Naive thymus-derived CD8-positive, alpha-beta T cell (primary cell): ENCODE measurements at regions of chr10 and their contacts with region 1.

Region 1: DNA sequence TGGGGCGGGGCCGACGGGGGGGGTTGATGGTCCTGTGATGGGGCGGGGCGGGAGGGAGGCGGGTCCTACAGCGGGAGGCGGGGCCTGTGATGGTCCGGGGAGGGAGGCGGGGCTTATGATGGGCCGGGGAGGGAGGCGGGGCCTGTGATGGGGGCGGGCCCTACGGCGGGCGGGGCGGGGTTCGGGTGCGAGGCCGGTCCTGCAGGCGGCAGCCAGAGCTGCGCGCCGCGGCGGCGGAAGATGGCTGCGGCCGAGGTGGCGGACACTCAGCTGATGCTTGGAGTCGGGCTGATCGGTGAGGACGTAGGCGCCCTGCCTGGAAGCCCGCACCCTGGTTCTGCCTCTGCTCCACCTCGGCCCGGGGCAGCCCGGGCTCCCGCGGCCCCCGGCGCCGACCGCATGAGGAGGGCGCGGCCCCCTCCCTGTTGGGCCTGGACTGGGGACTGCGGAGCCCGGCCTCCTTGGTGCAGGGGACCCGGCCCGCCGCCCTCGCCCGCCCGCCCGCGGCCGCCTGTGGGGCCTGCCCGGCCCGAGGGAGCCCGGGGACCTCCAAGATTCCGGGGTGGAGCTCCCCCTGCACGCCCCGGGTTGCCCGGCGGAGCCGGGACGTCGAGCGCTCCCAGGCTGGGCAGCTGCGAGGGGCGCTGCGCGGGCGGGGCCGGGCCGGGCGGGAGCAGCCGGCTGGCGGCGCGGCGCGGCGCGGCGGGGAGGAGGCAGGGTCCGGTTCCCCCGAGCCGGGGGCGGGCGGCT is at the start of gene DENND10:
- DNase-seq: peak; percentile 41 to 86 (median 70)
- ATAC-seq: peak; percentile 75
- H3K4me3 Mint-ChIP-seq: peak within 1 kb of the TSS; percentile 73 to 90 (median 86)
- H3K27ac Mint-ChIP-seq: peak within 1 kb of the TSS; percentile 63 to 94 (median 88)
- H3K4me1 Mint-ChIP-seq: peaks cover 6 to 32% (median 17%) of the 10 kb centered on the region in 4 donors
- H3K27me3 Mint-ChIP-seq: no peaks in the 10 kb centered on the region
- polyA plus RNA-seq, gene DENND10: 18.3 to 20.4 (median 20.1) TPM

Region 2: GRCh38 chr10:119080521-119081260 is 23.4 kb before region 1 on chr10 and contains the start of gene EIF3A:
- POLR2A ChIA-PET with region 1: interaction called, 20 read pairs
- DNase-seq: peak; percentile 82 to 94 (median 92)
- ATAC-seq: peak; percentile 77 to 80
- H3K4me3 Mint-ChIP-seq: peak within 1 kb of the TSS; percentile 93 to 100 (median 96)
- H3K27ac Mint-ChIP-seq: peak within 1 kb of the TSS; percentile 94 to 99 (median 98)
- H3K4me1 Mint-ChIP-seq: peaks cover 26 to 61% (median 42%) of the 10 kb centered on the region in 4 donors
- H3K27me3 Mint-ChIP-seq: no peaks in the 10 kb centered on the region
- polyA plus RNA-seq, gene EIF3A: 30.0 to 56.2 (median 45.0) TPM

Region 3: GRCh38 chr10:119165171-119166110 is 61.4 kb after region 1 on chr10 and contains the start of gene SFXN4:
- POLR2A ChIA-PET with region 1: interaction called, 11 read pairs
- DNase-seq: peak; percentile 66 to 85 (median 80)
- ATAC-seq: peak; percentile 87 to 92
- H3K4me3 Mint-ChIP-seq: peak within 1 kb of the TSS; percentile 85 to 95 (median 90)
- H3K27ac Mint-ChIP-seq: peak within 1 kb of the TSS; percentile 87 to 98 (median 95)
- H3K4me1 Mint-ChIP-seq: peaks cover 18 to 44% (median 33%) of the 10 kb centered on the region in 4 donors
- H3K27me3 Mint-ChIP-seq: no peaks in the 10 kb centered on the region
- polyA plus RNA-seq, gene SFXN4: 18.3 to 31.3 (median 28.2) TPM